ENCODE measurements at regions of chr19 and their contacts with region 1.

Region 1: DNA sequence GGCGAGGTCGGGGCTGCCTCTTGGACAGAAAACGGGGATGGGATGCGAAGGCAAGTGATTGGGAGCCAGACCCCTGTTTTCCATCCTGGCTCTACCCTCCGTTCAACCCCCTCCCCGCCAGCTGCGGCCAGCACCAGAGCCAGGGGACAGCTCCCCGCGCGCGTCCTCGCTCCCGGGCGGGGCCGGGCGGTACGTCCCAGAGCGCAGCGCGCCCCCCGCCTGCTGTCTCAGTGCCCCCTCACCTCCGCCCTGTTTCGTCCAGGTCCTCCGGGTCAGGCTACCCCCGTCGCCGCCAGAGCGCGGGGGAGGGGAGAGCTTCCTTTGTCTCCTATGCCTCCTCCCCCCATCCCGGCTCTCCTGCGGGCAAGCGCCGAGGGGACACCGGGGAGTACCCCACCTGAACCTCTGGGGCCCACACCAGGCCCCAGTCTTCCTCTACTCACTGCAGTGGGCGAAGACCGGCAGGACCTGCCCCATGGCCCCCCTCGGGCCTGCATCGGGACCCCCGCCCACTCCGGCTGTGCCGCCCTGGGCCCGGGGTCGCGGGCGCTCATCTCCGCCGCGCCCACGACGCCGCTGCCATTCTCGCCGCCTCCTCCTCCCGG is 396 bp downstream of the RTN2 start:
- DNase-seq: peak; percentile 56
- H3K4me3 Mint-ChIP-seq: peak overlapping the region; percentile 55
- H3K27ac Mint-ChIP-seq: no peak overlapping the region
- H3K4me1 Mint-ChIP-seq: peaks cover 32% of the 10 kb centered on the region
- H3K27me3 Mint-ChIP-seq: peaks cover 27% of the 10 kb centered on the region

Region 2: DNA sequence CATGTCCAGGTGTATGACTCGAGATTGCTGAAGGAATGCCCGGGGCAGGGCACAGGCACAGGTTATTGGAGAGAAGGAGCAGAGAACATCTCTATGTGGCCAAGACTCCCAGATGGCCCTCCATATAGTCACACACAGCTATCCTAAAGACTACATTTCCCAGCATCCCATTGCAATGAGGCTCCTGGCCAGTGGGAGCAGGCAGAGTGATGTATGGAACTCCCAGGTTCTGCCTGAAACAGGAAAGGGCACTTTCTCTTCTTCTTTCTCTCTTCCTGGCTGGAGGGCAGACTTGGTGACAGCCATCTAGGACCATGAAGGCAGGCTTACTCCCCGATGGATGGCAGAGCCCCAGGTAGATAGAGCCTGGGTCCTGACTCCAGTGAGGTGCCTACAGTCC is 105.1 kb before region 1 on chr19:
- CTCF ChIA-PET with region 1: no interaction called
- intact Hi-C with region 1: no loop called
- DNase-seq: no peak
- H3K4me3 Mint-ChIP-seq: no peak overlapping the region
- H3K27ac Mint-ChIP-seq: no peak overlapping the region
- H3K4me1 Mint-ChIP-seq: peaks cover 4% of the 10 kb centered on the region
- H3K27me3 Mint-ChIP-seq: peaks cover 10% of the 10 kb centered on the region

Region 3: GRCh38 chr19:45469132-45469944 is 27.1 kb before region 1 on chr19:
- CTCF ChIA-PET with region 1: interaction called, 3 read pairs
- intact Hi-C with region 1: loop called (anchors 1 kb)
- DNase-seq: peak; percentile 91
- H3K4me3 Mint-ChIP-seq: peak overlapping the region; percentile 77
- H3K27ac Mint-ChIP-seq: peak overlapping the region; percentile 75
- H3K4me1 Mint-ChIP-seq: peaks cover 42% of the 10 kb centered on the region
- H3K27me3 Mint-ChIP-seq: peaks cover 26% of the 10 kb centered on the region

Region 4: DNA sequence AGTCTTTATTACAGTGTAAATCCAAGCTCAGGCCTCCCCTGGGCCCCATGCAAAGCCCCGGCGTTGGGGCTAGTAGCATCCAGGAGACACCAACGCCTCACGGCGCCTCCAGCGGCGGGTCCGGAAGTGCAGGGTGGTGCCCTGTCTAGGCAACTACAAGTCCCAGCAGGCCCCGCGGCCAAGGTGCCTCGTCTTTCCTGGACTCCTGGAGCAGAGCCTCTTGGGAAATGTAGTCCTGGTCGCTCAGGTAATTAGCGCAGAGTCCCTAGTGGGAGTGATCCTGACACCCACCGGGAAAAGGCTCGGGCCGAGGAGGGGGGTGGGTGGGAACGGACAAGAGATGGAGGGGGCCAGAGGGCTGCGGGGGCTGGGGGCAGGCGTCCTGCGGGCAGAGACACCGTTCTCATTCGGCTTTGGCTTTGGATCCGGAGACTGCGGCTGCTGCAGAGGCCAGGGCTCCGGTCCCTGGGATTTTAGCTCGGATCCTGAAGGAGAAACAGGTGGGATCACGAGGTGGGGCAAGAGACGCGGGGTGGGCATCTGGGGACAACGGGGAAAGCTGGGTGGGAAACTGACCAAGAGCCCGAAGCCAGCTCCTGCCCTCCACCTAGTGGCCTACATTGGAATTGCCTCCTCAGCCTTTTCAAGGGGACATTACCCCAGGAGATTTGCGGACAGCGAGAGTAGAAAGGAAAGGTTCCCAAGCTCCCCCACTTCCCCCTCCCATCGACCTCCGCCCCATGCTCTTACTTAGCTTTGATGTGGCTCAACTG is 11.0 kb before region 1 on chr19:
- CTCF ChIA-PET with region 1: interaction called, 54 read pairs
- intact Hi-C with region 1: no loop called
- DNase-seq: peak; percentile 99
- H3K4me3 Mint-ChIP-seq: peak overlapping the region; percentile 81
- H3K27ac Mint-ChIP-seq: peak overlapping the region; percentile 46
- H3K4me1 Mint-ChIP-seq: peaks cover 4% of the 10 kb centered on the region
- H3K27me3 Mint-ChIP-seq: no peaks in the 10 kb centered on the region

Region 5: GRCh38 chr19:45558399-45558878 is 62.0 kb after region 1 on chr19:
- CTCF ChIA-PET with region 1: interaction called, 12 read pairs
- intact Hi-C with region 1: loop called (anchors 1 kb)
- DNase-seq: peak; percentile 88
- H3K4me3 Mint-ChIP-seq: no peak overlapping the region
- H3K27ac Mint-ChIP-seq: no peak overlapping the region
- H3K4me1 Mint-ChIP-seq: peaks cover 30% of the 10 kb centered on the region
- H3K27me3 Mint-ChIP-seq: no peaks in the 10 kb centered on the region

Region 6: GRCh38 chr19:45569619-45570421 is 73.4 kb after region 1 on chr19:
- CTCF ChIA-PET with region 1: interaction called, 3 read pairs
- intact Hi-C with region 1: loop called (anchors 2 kb)
- DNase-seq: peak; percentile 80
- H3K4me3 Mint-ChIP-seq: no peak overlapping the region
- H3K27ac Mint-ChIP-seq: peak overlapping the region; percentile 59
- H3K4me1 Mint-ChIP-seq: peaks cover 14% of the 10 kb centered on the region
- H3K27me3 Mint-ChIP-seq: no peaks in the 10 kb centered on the region

Region 7: DNA sequence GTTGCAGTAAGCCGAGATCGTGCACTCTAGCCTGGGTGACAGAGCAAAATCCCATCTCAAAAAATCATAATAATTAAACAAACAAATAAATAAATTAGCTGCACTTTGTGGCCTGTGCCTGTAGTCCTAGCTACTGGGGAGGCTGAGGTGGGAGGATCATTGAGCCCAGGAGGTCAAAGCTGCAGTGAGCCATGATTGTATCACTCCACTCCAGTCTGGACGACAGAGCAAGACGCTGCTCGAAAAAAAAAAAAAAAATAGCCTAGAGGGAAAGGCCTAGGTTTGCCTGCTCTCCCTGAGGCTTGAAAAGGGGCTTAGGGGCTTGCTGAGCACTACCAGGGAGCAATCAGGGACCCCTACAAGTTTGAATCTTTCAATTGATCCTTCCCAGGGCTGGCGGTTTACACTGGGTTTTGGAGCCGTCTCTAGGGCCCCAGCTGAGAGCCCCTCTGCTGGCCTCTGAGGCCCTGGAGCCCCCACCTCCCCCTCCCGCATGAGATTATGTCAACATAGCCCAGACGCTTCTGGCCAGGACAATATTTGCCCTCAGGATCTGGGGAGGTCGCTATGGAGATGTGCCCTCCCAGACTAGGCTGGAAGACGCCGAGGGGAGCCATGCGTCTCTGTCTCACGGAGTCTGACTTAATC is 161.2 kb after region 1 on chr19:
- CTCF ChIA-PET with region 1: no interaction called
- intact Hi-C with region 1: no loop called
- DNase-seq: no peak
- H3K4me3 Mint-ChIP-seq: no peak overlapping the region
- H3K27ac Mint-ChIP-seq: no peak overlapping the region
- H3K4me1 Mint-ChIP-seq: no peaks in the 10 kb centered on the region
- H3K27me3 Mint-ChIP-seq: no peaks in the 10 kb centered on the region